H1 (cell line): ENCODE measurements at regions of chr2 and their contacts with region 1.

Region 1: GRCh38 chr2:181904022-181904632 is 12.6 kb downstream of the ITPRID2 start:
- DNase-seq: no peak
- H3K4me3 ChIP-seq: no peak overlapping the region
- H3K27ac ChIP-seq: no peak overlapping the region
- H3K4me1 ChIP-seq: no peaks in the 10 kb centered on the region
- H3K27me3 ChIP-seq: no peaks in the 10 kb centered on the region
- CTCF ChIP-seq: peak in 2 of 3 experiments; percentile 29 to 58; a peak in 2 of 4 replicates
- EP300 ChIP-seq: no peak
- POLR2A ChIP-seq: no peak
- RAD21 ChIP-seq: peak; percentile 60 to 62

Region 2: GRCh38 chr2:181742922-181743722 is 161.0 kb before region 1 on chr2:
- CTCF ChIA-PET with region 1: interaction called, 101 read pairs
- POLR2A ChIA-PET with region 1: no interaction called
- DNase-seq: no peak
- H3K4me3 ChIP-seq: no peak overlapping the region
- H3K27ac ChIP-seq: no peak overlapping the region
- H3K4me1 ChIP-seq: no peaks in the 10 kb centered on the region
- H3K27me3 ChIP-seq: no peaks in the 10 kb centered on the region
- CTCF ChIP-seq: peak in 2 of 3 experiments; percentile 45 to 54; a peak in 2 of 4 replicates
- EP300 ChIP-seq: no peak
- POLR2A ChIP-seq: no peak
- RAD21 ChIP-seq: peak; percentile 74 to 77

Region 3: GRCh38 chr2:181891258-181891965 is 12.7 kb before region 1 on chr2 and contains the start of gene ITPRID2:
- CTCF ChIA-PET with region 1: interaction called, 31 read pairs
- POLR2A ChIA-PET with region 1: interaction called, 3 read pairs
- DNase-seq: peak in 1 of 2 experiments; percentile 43
- H3K4me3 ChIP-seq: peak within 1 kb of the TSS; percentile 72 to 84 (median 78)
- H3K27ac ChIP-seq: no peak within 1 kb of the TSS
- H3K4me1 ChIP-seq: peaks cover 0 to 4% (median 0%) of the 10 kb centered on the region in 4 experiments; a peak in 2 of 7 replicates
- H3K27me3 ChIP-seq: no peaks in the 10 kb centered on the region; a peak in 2 of 7 replicates
- CTCF ChIP-seq: peak; percentile 14 to 49 (median 34); a peak in 3 of 4 replicates
- EP300 ChIP-seq: no peak
- POLR2A ChIP-seq: no peak
- RAD21 ChIP-seq: peak in 1 of 2 experiments; percentile 16; a peak in 1 of 4 replicates
- total RNA-seq, gene ITPRID2: 12.6 and 13.5 TPM in 2 replicates

Region 4: GRCh38 chr2:182197529-182197928 is 293.4 kb after region 1 on chr2:
- CTCF ChIA-PET with region 1: no interaction called
- POLR2A ChIA-PET with region 1: no interaction called
- DNase-seq: no peak
- H3K4me3 ChIP-seq: no peak overlapping the region
- H3K27ac ChIP-seq: no peak overlapping the region
- H3K4me1 ChIP-seq: peaks cover 0 to 3% (median 0%) of the 10 kb centered on the region in 4 experiments; a peak in 1 of 7 replicates
- H3K27me3 ChIP-seq: peaks cover 0 to 1% (median 0%) of the 10 kb centered on the region in 4 experiments; a peak in 1 of 7 replicates
- CTCF ChIP-seq: no peak
- EP300 ChIP-seq: no peak
- POLR2A ChIP-seq: no peak
- RAD21 ChIP-seq: no peak